ENCODE measurements at regions of chr17 and their contacts with region 1.

Region 1: DNA sequence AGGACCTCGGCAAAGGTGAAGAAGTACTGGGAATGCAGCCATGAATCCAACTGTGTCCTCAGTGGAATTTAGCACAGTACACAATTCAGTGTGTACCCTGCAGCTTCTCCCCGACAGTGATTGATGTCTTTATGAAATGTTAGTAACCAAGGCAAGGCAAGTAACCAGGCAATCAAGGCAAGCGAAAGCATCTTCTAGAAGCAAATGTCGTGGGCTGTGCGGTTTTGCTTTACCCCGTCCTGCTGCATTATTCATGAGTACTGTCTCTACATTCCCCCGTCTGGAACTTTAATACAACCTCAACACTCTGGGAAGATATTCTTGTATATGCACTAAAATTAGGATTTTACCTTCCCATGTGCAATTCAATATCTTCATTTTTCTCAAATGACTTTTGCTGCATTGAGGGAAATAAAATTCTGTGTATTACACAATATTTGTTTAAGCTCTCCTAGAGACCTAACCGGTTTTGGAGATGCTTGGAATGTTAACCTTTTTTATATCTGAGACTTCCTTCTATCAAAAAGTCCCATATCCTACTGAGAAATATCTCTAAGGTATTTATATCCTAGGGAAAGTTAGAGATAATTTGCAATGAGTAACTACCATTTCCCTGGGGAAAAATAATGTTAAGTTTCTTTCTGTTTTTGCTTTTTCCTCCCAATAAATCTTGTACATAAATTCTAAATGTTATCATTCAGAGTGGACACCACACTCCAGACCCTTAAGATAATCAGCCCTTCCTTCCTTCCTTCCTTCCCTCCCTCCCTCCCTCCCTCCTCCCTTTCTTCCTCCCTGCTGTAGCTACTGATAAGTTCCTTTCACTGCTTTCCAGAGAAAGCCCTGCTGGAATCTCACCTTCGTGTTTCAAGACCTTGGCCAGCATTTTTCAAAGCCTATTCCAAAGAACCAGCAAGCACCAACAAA is 51.9 kb upstream of the ADORA2B start:
- DNase-seq: peak; percentile 74 to 92
- H3K4me3 ChIP-seq: peak overlapping the region; percentile 44; the same call in 1 of the 2 replicates
- H3K27ac ChIP-seq: peak overlapping the region; percentile 99
- H3K4me1 ChIP-seq: peaks cover 61% of the 10 kb centered on the region
- H3K27me3 ChIP-seq: no peaks in the 10 kb centered on the region
- CTCF ChIP-seq: no peak

Region 2: GRCh38 chr17:14133104-14133503 is 1759.9 kb before region 1 on chr17:
- CTCF ChIA-PET with region 1: no interaction called
- POLR2A ChIA-PET with region 1: interaction called, 10 read pairs
- intact Hi-C with region 1: no loop called
- DNase-seq: no peak
- H3K4me3 ChIP-seq: no peak overlapping the region
- H3K27ac ChIP-seq: no peak overlapping the region
- H3K4me1 ChIP-seq: no peaks in the 10 kb centered on the region
- H3K27me3 ChIP-seq: no peaks in the 10 kb centered on the region
- CTCF ChIP-seq: no peak

Region 3: GRCh38 chr17:15909481-15909991 is 16.5 kb after region 1 on chr17:
- CTCF ChIA-PET with region 1: no interaction called
- POLR2A ChIA-PET with region 1: no interaction called
- intact Hi-C with region 1: loop called (anchors 1 kb)
- DNase-seq: no peak
- H3K4me3 ChIP-seq: no peak overlapping the region
- H3K27ac ChIP-seq: 0 out of 2 replicates have a peak overlapping the region, but pooled peaks have one; percentile 12
- H3K4me1 ChIP-seq: peaks cover 38% of the 10 kb centered on the region
- H3K27me3 ChIP-seq: no peaks in the 10 kb centered on the region
- CTCF ChIP-seq: no peak

Region 4: DNA sequence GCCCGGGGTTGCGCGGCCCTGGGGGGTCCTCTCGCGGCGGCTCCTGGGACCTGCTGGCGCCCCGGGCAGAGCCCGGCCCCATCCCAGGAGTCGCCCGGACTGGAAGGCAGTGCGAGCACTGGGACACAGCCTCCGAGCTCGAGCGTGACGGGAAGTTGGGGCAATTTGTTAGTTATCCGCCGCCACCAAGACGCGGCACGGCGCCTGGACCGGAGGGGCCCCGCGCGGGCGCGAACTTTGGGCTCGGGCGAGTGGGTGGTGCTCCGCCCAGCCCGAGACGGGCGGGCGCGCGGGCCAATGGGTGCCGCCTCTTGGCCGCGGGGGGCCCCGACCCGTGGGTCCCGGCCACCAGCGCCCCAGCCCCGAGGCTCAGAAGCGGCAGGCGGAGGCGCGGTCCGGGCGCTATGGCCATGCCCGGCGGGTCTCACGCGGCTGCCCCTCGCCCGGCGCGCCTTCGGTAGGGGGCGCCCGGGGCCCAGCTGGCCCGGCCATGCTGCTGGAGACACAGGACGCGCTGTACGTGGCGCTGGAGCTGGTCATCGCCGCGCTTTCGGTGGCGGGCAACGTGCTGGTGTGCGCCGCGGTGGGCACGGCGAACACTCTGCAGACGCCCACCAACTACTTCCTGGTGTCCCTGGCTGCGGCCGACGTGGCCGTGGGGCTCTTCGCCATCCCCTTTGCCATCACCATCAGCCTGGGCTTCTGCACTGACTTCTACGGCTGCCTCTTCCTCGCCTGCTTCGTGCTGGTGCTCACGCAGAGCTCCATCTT is 52.0 kb after region 1 on chr17 and contains the start of gene ADORA2B:
- CTCF ChIA-PET with region 1: interaction called, 14 read pairs
- POLR2A ChIA-PET with region 1: interaction called, 3 read pairs
- intact Hi-C with region 1: loop called (anchors 2 kb)
- DNase-seq: peak; percentile 51 to 84
- H3K4me3 ChIP-seq: peak within 1 kb of the TSS; percentile 91
- H3K27ac ChIP-seq: peak within 1 kb of the TSS; percentile 92
- H3K4me1 ChIP-seq: peaks cover 26% of the 10 kb centered on the region
- H3K27me3 ChIP-seq: no peaks in the 10 kb centered on the region
- CTCF ChIP-seq: peak; percentile 30; the same call in 1 of the 2 replicates
- total RNA-seq, gene ADORA2B: 32.6 and 42.7 TPM in 2 replicates

Region 5: GRCh38 chr17:15981208-15981607 is 88.2 kb after region 1 on chr17:
- CTCF ChIA-PET with region 1: no interaction called
- POLR2A ChIA-PET with region 1: no interaction called
- intact Hi-C with region 1: loop called (anchors 2 kb)
- DNase-seq: peak in 1 of 2 experiments; percentile 93
- H3K4me3 ChIP-seq: peak overlapping the region; percentile 10; the same call in 1 of the 2 replicates
- H3K27ac ChIP-seq: peak overlapping the region; percentile 93
- H3K4me1 ChIP-seq: peaks cover 42% of the 10 kb centered on the region
- H3K27me3 ChIP-seq: no peaks in the 10 kb centered on the region
- CTCF ChIP-seq: no peak

Region 6: DNA sequence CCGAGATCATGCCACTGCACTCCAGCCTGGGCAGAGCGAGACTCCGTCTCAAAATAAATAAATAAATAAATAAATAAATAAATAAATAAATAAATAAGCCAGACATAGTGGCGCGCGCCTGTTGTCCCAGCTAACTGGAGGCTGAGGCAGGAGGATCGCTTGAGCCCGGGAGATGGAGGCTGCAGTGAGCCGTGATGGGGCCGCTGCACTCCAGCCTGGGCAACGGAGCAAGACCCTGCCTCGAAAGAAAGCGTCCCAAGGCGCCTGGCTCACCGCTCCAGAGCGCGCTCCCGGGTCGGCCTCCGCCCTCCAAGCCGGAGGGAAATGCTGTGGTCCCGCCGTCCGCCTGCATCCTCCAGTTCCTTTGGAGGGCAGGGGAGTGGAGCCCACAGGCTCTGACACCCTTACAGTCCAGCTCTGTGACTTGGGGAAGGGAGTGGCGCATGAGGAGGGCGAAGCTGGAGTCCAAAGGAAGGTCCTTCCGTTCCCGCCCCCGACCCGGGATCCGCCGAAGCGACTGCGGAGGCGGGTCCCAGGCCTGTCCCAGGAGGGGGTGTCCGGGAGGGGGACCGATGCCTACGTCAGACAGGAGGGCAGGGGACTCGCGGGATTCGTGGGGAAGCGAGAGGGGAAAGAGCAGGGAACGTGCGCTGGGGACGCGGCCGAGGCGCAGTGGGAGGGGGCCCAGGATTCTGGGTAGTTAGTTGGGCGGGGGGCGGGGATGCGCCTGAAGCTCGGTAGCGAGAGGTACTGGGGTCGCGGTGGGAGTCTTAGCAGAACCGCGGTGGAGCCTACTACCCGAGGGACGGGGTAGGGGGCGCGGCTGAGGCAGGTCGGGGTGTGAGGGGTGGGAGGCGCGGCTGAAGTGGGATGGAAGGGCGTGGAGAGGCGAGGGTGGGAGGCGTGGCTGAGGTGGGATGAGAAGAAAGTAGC is 514.0 kb after region 1 on chr17:
- CTCF ChIA-PET with region 1: interaction called, 13 read pairs
- POLR2A ChIA-PET with region 1: no interaction called
- intact Hi-C with region 1: no loop called
- DNase-seq: peak in 1 of 2 experiments; percentile 27
- H3K4me3 ChIP-seq: peak overlapping the region; percentile 31; the same call in 1 of the 2 replicates
- H3K27ac ChIP-seq: no peak overlapping the region
- H3K4me1 ChIP-seq: no peaks in the 10 kb centered on the region
- H3K27me3 ChIP-seq: no peaks in the 10 kb centered on the region
- CTCF ChIP-seq: no peak

Measured in PC-9 (cell line).